GM10248 (cell line): ENCODE measurements at regions of chr12 and their contacts with region 1.

Region 1: DNA sequence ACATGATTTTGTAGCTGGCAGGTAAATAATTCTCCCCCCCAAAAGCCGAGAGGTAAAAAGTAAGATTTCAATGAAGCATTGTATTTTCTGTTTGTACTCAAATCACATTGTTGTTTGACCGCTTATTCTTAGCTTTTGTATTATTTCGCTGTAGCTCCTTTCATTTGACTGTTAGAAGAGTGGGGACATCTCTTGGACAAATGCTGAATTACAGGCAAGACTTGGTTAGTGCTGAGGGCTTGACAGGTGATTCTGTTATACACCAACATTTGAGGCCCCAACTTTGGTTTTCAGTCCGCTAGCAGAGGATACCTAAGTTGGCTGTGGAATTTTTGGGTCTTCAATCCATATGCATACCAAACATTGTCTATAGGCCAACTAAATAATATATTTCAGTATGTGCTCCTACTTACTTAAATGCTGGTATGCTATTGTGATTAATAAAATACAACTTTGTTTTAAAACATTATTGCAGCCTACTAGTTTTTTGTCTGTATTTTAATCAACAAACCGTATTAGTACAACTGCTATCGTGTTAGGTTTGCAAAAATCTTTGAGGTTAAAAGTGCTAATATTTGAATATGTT is 102.2 kb downstream of the ERC1 start:
- DNase-seq: peak; percentile 47
- CTCF ChIP-seq: peak; percentile 77

Region 2: DNA sequence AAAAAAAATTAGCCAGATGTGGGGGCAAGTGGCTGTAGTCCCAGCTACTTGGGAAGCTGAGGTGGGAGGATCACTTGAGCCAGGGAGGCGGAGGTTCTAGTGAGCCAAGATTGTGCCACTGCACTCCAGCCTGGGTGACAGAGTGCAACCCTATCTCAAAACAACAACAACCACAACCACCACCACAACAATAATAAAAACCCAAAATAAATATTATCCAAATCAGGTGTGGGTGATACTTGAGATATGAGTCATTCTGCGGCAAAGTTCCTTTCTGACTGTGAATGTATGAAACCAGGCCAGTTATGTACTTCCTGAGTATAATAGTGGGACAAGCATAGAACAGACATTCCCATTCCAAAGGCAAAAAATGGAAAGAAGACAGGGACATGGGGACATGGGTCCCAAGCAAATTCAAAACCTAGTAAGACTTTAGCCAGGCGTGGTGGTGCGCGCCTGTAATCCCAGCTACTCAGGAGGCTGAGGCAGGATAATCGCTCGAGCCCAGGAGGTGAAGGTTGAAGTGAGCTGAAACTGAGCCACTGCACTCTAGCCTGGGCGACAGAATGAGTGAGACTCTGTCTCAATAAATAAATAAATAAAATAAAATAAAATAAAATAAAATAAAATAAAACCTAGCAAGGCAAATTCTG is 112.0 kb before region 1 on chr12:
- CTCF ChIA-PET with region 1: no interaction called
- POLR2A ChIA-PET with region 1: no interaction called
- DNase-seq: no peak
- CTCF ChIP-seq: no peak

Region 3: GRCh38 chr12:1030779-1031178 is 62.5 kb before region 1 on chr12:
- CTCF ChIA-PET with region 1: no interaction called
- POLR2A ChIA-PET with region 1: no interaction called
- DNase-seq: no peak
- CTCF ChIP-seq: no peak

Region 4: GRCh38 chr12:1073652-1074051 is 19.6 kb before region 1 on chr12:
- CTCF ChIA-PET with region 1: interaction called, 19 read pairs
- POLR2A ChIA-PET with region 1: no interaction called
- DNase-seq: no peak
- CTCF ChIP-seq: no peak

Region 5: DNA sequence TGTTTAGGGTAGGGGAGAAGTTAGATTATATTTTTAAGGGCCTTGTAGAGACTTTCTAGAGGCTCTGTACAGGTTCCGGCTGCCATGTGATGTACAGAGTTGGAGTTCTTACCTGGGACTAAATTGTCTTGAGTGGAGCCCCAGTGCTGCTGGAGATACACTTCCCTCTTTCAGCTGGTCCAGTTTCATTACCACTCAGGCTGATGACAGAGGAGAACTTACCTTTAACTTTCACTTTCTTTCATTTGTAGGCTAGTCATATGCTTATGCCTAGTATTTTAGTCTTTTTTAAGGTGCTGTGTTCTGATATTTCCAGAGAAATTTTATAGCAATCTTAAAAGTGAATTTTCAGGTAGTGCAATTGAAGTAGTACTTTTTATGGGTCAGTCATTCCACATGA is 15.0 kb after region 1 on chr12:
- CTCF ChIA-PET with region 1: interaction called, 34 read pairs
- POLR2A ChIA-PET with region 1: no interaction called
- DNase-seq: peak; percentile 74
- CTCF ChIP-seq: no peak

Region 6: DNA sequence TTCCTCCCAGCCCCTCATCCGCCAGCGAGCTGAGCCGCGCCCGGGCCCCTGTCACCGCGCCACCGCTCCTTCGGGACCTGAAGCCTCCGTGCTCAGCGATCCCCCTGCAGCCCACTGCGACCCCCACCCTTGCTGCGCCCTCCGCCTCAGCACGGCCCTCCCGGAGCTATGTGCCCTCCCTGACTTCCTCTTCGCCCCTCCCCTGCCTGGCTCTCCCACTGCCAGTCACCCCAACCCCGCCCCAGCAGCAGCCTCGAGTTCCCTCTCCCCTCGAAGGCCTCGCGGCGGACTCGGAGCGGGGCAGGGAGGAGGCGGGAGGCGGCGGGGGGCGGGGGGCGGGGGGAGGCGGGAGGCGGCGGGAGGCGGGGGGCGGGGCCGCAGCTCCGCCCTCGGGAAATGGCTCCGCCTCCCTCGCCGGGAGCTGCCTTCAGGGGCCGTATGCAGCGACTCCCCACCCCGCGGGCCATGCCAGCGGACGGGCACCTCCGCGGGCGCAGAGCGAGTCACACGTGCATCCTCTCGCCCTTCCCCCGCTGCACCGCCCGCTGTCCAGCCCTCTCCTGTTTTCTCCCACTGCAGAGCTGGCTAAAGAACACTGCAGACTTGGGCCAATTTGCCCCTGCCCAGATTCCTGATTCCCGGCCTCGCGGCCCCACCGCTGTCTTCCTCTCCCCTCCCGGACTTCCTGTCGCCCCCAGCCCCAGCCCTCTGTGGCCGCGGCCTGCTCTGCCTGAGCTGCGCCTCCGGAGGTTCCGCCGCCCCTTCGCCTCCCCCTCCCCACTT is 568.5 kb after region 1 on chr12:
- CTCF ChIA-PET with region 1: no interaction called
- POLR2A ChIA-PET with region 1: no interaction called
- DNase-seq: peak; percentile 88
- CTCF ChIP-seq: no peak